Activated CD4-positive, alpha-beta T cell treated with anti-CD3 and anti-CD28 coated beads for 36 hours (primary cell): ENCODE measurements at regions of chr11 and their contacts with region 1.

Region 1: DNA sequence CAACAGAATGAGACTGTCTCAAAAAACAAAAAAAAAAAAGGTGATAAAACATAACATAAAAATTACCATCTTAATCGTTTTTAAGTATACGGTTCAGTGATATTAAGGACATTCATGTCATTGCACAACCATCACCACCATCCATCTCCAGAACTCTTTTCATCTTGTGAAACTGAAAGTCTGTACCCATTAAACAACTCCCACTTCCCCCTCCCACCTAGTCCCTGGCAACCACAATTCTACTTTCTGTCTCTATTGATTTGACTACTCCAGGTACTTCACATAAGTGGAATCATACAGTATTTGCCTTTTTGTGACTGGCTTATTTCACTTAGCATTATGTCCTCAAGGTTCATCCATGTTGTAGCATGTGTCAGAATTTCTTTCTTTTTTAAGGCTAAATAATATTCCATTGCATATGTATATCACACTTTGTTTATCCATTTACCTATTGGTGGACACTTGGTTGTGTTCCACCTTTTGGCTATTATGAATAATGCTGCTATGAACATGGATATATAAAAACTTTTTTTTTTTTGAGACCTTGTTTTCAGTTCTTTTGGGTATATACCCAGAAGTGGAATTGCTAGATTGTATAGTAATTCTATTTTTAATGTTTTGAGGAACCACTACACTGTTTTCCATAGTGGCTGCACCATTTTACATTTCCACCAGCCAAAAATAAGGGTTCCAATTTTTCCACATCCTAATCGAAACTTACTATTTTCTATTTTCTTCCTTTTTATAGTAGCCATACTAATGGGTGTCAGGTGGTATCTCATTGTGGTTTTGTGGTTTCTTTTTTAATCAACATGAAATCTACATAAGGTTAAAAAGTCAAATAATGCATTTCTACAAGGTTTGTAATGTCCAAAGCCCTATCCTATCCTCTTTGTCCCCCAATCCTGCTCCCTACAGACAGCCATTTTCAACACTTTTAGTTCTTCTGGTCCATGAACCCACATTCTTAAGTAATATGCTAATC is 23.4 kb upstream of the PIK3C2A start:
- DNase-seq: peak; percentile 67
- ATAC-seq: peak; percentile 94
- H3K4me3 Mint-ChIP-seq: no peak overlapping the region
- H3K27ac Mint-ChIP-seq: no peak overlapping the region
- H3K4me1 Mint-ChIP-seq: peaks cover 16% of the 10 kb centered on the region
- H3K27me3 Mint-ChIP-seq: peaks cover 8% of the 10 kb centered on the region

Region 2: GRCh38 chr11:17036666-17037542 is 194.3 kb before region 1 on chr11:
- CTCF ChIA-PET with region 1: no interaction called
- POLR2A ChIA-PET with region 1: no interaction called
- intact Hi-C with region 1: no loop called
- DNase-seq: peak; percentile 31
- ATAC-seq: peak; percentile 33
- H3K4me3 Mint-ChIP-seq: no peak overlapping the region
- H3K27ac Mint-ChIP-seq: no peak overlapping the region
- H3K4me1 Mint-ChIP-seq: no peaks in the 10 kb centered on the region
- H3K27me3 Mint-ChIP-seq: no peaks in the 10 kb centered on the region

Region 3: GRCh38 chr11:17207317-17208258 is 23.6 kb before region 1 on chr11 and contains the start of gene PIK3C2A:
- CTCF ChIA-PET with region 1: interaction called, 13 read pairs
- POLR2A ChIA-PET with region 1: no interaction called
- intact Hi-C with region 1: loop called (anchors 1 to 2 kb)
- DNase-seq: peak; percentile 97
- ATAC-seq: peak; percentile 97
- H3K4me3 Mint-ChIP-seq: peak within 1 kb of the TSS; percentile 91
- H3K27ac Mint-ChIP-seq: peak within 1 kb of the TSS; percentile 97
- H3K4me1 Mint-ChIP-seq: peaks cover 40% of the 10 kb centered on the region
- H3K27me3 Mint-ChIP-seq: no peaks in the 10 kb centered on the region
- total RNA-seq, gene PIK3C2A: 23.3 to 27.3 TPM

Region 4: DNA sequence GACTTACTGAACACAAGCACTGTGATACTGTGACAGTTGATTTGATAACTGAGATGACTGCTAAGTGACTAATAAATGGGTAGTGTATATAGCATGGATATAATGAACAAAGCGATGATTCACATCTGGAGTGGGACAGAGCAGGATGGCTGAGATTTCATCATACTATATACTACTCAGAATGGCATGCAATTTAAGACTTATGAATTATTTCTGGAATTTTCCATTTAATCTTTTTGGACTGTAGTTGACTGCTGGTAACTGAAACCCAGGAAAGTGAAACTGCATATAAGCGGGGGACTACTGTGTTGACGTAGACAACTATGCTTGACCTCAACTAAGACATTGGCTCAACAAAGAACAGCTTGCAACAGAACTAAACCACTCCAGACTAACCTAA is 25.4 kb after region 1 on chr11:
- CTCF ChIA-PET with region 1: interaction called, 4 read pairs
- POLR2A ChIA-PET with region 1: no interaction called
- intact Hi-C with region 1: loop called in 1 of 2 experiments (anchors 1 kb)
- DNase-seq: no peak
- ATAC-seq: peak; percentile 87
- H3K4me3 Mint-ChIP-seq: no peak overlapping the region
- H3K27ac Mint-ChIP-seq: peak overlapping the region; percentile 5
- H3K4me1 Mint-ChIP-seq: peaks cover 19% of the 10 kb centered on the region
- H3K27me3 Mint-ChIP-seq: peaks cover 1% of the 10 kb centered on the region

Region 5: GRCh38 chr11:17276236-17277023 is 45.3 kb after region 1 on chr11 and contains the start of gene NUCB2:
- CTCF ChIA-PET with region 1: interaction called, 6 read pairs
- POLR2A ChIA-PET with region 1: no interaction called
- intact Hi-C with region 1: loop called (anchors 1 kb)
- DNase-seq: peak; percentile 99
- ATAC-seq: peak; percentile 92
- H3K4me3 Mint-ChIP-seq: peak within 1 kb of the TSS; percentile 75
- H3K27ac Mint-ChIP-seq: peak within 1 kb of the TSS; percentile 96
- H3K4me1 Mint-ChIP-seq: peaks cover 36% of the 10 kb centered on the region
- H3K27me3 Mint-ChIP-seq: no peaks in the 10 kb centered on the region
- total RNA-seq, gene NUCB2: 45.0 to 59.9 TPM

Region 6: DNA sequence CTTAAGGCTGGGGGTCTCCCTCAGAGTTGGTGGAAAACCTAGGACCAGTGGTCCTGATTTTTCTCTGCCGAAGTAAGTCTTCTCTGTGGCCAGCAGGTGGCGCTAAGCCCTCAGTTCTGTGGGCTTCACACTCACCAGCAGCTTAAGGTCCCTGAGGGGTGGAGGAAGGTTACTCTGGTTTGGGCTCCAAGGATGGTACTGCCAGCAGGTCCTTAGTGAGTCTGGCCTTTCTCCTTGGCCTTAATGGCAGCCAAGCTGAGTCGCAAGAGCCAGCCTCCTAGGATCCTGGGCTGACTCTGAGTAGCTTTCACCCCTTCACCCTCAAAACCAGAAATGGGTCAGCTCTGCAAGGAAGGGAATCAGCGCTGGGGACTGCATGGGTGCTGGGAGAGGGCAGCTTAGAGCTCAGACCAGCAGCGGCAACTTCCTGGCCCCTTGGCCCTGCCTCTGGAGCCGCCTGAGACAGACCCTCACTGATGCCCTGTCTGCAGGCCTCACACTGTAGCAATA is 152.9 kb after region 1 on chr11:
- CTCF ChIA-PET with region 1: interaction called, 25 read pairs
- POLR2A ChIA-PET with region 1: interaction called, 4 read pairs
- intact Hi-C with region 1: loop called (anchors 1 kb)
- DNase-seq: peak; percentile 90
- ATAC-seq: peak; percentile 64
- H3K4me3 Mint-ChIP-seq: no peak overlapping the region
- H3K27ac Mint-ChIP-seq: no peak overlapping the region
- H3K4me1 Mint-ChIP-seq: no peaks in the 10 kb centered on the region
- H3K27me3 Mint-ChIP-seq: peaks cover 8% of the 10 kb centered on the region

Region 7: DNA sequence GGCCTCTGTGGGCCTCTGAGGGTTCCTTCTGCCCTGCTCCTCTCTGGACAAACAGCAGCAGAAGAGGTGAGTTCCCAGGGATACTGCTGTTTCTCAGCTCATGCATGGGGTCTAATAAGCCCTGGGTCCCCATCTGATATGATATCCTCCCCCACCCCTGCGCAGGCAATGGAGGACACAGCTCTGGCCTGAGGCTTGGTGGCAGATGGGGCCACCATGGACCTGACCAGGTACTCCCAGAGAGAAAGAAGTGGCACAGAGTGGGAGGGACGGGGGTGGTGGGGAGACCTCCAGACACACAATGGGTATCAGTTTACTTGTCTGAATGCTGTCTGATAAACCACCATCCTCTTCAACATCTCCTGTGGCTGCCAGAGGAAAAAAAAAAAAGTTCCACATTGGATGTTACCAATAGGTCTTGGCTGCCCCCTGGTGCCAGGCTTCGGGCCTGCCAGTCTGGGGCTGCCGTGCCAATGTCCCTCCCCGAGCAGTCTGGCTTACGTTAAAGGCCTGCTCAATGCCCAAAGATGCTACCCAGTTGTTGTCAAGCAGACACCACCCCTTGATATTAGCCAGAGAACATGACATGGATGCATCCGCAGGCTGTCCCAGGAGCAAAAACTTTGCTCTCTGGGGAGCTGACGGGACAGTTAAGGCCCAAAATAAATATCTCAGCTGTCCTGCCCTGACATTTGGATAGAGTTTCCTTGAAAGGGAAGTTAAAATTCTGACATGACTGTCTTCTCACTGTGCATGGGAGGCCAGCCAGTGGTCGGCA is 273.4 kb after region 1 on chr11:
- CTCF ChIA-PET with region 1: interaction called, 16 read pairs
- POLR2A ChIA-PET with region 1: no interaction called
- intact Hi-C with region 1: loop called (anchors 1 kb)
- DNase-seq: peak; percentile 88
- ATAC-seq: peak; percentile 90
- H3K4me3 Mint-ChIP-seq: no peak overlapping the region
- H3K27ac Mint-ChIP-seq: no peak overlapping the region
- H3K4me1 Mint-ChIP-seq: no peaks in the 10 kb centered on the region
- H3K27me3 Mint-ChIP-seq: peaks cover 7% of the 10 kb centered on the region

Region 8: DNA sequence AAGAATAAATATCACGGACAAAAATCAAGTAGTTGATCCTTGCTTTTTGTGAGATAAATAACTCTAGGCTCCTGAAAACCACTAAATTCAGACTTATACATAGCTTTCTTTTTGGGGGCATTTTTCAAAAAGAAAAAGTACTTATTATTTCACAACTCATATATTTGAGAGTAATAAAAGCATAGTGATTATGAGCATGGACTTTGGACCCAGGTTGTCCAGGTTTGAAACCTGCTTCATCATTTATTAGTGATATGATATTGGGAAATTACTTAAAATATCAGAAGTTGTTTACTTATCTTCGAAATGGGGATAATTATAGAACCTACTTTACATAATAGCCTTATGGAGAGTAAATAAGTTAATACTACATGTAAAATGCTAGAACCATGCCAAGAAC is 1207.5 kb after region 1 on chr11:
- CTCF ChIA-PET with region 1: no interaction called
- POLR2A ChIA-PET with region 1: no interaction called
- intact Hi-C with region 1: no loop called
- DNase-seq: no peak
- ATAC-seq: no peak
- H3K4me3 Mint-ChIP-seq: no peak overlapping the region
- H3K27ac Mint-ChIP-seq: no peak overlapping the region
- H3K4me1 Mint-ChIP-seq: no peaks in the 10 kb centered on the region
- H3K27me3 Mint-ChIP-seq: no peaks in the 10 kb centered on the region